Dendritic cell treated with granulocyte-macrophage colony-stimulating factor and Interleukin-4, amounts not matched to agents 40 ng/mL and 50 ng/mL, for 4 days (primary cell): ENCODE measurements at regions of chr15 and their contacts with region 1.

Region 1: DNA sequence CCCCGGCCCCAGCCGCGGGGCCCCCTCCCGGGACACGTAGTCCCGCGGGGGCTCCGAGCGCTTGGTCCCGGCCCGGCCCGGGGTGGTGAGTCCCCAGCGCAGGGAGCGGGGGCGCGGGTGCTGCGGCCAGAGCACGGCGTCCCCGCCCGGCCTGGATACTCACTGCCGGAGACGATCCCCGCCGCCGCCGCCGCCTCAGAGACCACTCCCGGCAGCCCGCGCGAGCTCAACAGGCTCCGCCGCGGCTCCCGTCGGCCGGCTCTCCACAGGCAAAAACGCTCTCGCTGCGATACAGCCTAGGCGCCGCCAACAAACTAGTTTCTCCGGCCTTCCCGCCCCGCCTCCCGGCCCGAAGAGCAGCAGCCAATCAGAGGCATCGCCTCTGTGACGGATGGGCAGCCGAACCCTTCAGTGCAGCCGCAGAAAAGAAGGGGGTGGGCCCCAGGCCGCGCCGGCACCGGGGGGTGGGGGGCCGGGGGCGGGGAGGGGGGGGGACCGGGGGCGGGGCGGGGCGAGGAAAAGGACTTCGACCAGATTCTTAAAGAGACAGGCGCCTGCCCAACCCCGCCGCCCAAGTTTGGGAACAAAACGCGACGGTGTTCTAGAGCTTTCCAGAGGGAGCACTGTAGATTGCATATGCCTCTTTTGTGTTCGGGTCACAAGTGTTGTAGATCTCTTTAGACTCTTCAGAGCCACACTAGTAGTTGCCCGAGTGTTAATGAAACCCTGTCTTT is at the start of gene KLHL25:
- H3K4me3 Mint-ChIP-seq: peak within 1 kb of the TSS; percentile 81
- H3K27ac Mint-ChIP-seq: peak within 1 kb of the TSS; percentile 77
- H3K4me1 Mint-ChIP-seq: peaks cover 27% of the 10 kb centered on the region
- H3K27me3 Mint-ChIP-seq: peaks cover 42% of the 10 kb centered on the region

Region 2: DNA sequence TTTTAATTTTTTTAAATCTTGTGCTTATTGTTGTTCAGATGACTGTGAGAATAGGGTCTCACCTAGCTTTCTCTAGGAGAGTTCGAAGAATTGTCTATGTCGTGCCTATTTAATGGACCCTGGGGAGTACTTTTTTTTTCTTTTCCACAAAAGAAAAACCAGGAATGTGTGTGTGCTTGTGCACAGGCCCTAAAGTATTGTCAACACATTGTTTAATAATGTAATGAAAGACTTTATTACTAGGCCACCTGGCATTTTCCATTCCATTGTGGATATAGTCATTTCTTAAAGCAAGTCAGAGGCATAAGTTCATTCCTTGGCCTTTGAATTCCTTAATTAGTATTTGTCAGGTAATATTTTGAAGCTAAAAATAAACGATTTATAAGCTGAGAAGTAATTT is 136.0 kb before region 1 on chr15:
- intact Hi-C with region 1: no loop called
- H3K4me3 Mint-ChIP-seq: no peak overlapping the region
- H3K27ac Mint-ChIP-seq: no peak overlapping the region
- H3K4me1 Mint-ChIP-seq: peaks cover 22% of the 10 kb centered on the region
- H3K27me3 Mint-ChIP-seq: no peaks in the 10 kb centered on the region

Region 3: GRCh38 chr15:85751346-85752123 is 43.2 kb before region 1 on chr15:
- intact Hi-C with region 1: no loop called
- H3K4me3 Mint-ChIP-seq: no peak overlapping the region
- H3K27ac Mint-ChIP-seq: peak overlapping the region; percentile 77
- H3K4me1 Mint-ChIP-seq: peaks cover 65% of the 10 kb centered on the region
- H3K27me3 Mint-ChIP-seq: no peaks in the 10 kb centered on the region

Region 4: GRCh38 chr15:85761635-85762034 is 33.1 kb before region 1 on chr15:
- intact Hi-C with region 1: no loop called
- H3K4me3 Mint-ChIP-seq: no peak overlapping the region
- H3K27ac Mint-ChIP-seq: no peak overlapping the region
- H3K4me1 Mint-ChIP-seq: no peaks in the 10 kb centered on the region
- H3K27me3 Mint-ChIP-seq: no peaks in the 10 kb centered on the region

Region 5: DNA sequence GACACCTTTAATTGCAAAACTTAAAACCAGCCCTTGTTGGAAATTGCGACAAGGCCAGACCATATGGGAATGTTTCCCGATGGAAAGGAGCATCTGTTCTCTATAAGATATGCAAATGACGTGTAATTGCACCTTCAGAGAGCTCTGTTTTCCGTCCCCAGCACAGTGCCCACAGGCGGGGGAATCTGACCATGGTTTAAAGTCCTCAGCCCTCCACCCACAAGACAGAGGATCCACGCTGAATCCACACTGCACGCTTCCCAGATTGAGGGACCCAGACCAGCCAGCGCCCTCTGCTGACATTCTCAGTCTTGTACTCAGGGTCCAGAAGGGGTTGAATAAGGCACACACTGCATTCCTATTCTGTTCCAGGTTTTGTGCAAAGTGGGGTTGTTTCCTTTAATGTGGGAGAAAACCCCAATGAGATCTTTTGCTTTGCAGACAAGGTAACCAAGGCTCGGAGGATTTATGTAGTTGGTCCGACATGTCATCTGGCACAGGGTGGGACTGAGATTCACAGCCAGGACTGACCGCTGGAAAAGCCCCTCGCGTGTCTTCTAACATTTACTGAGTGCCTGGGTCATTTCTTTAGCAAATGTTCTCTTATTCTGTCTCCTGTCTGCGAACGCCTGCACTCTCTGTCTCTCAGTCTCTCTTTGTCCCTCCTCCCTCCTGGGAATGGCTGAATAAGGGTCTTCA is 36.8 kb after region 1 on chr15:
- intact Hi-C with region 1: loop called (anchors 5 kb)
- H3K4me3 Mint-ChIP-seq: no peak overlapping the region
- H3K27ac Mint-ChIP-seq: peak overlapping the region; percentile 76
- H3K4me1 Mint-ChIP-seq: peaks cover 26% of the 10 kb centered on the region
- H3K27me3 Mint-ChIP-seq: peaks cover 2% of the 10 kb centered on the region

Region 6: GRCh38 chr15:85858586-85859375 is 64.0 kb after region 1 on chr15:
- intact Hi-C with region 1: no loop called
- H3K4me3 Mint-ChIP-seq: peak overlapping the region; percentile 15
- H3K27ac Mint-ChIP-seq: no peak overlapping the region
- H3K4me1 Mint-ChIP-seq: peaks cover 11% of the 10 kb centered on the region
- H3K27me3 Mint-ChIP-seq: peaks cover 23% of the 10 kb centered on the region